Dendritic cell treated with granulocyte-macrophage colony-stimulating factor and Interleukin-4, amounts not matched to agents 40 ng/mL and 50 ng/mL, for 4 days (primary cell): ENCODE measurements at regions of chr6 and their contacts with region 1.

Region 1: GRCh38 chr6:135280375-135281136 is 99.4 kb downstream of the MYB start:
- H3K4me3 Mint-ChIP-seq: no peak overlapping the region
- H3K27ac Mint-ChIP-seq: peak overlapping the region; percentile 58
- H3K4me1 Mint-ChIP-seq: peaks cover 35% of the 10 kb centered on the region
- H3K27me3 Mint-ChIP-seq: no peaks in the 10 kb centered on the region

Region 2: DNA sequence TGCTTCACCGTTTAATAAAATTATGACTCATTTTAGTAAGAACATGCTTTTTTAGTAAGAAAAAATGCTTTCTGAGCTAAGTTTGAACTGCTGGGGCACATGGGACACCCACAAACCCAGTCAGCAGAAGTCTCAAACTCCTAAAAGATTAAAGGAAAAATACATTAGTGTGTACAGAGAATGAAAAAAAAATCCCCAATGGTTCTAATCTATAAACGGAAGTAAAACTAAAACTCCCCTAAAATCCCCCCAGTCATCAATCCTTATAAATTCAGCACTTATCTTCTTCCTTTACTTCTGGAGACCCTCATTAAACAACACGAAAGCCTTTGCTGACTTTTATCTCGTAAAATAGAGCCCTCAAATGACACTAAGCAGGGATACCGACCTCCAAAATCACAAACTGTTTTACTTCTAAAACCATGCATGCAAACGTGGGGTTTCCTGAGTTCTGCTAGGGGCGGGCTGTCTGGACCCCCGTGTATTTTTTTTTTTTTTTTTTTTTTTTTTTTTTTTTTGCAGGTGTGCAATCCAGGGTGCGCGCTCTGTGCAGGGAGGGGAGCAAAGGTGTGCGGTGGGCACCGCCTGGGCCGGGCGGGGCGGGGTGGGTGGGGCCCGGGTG is 100.5 kb before region 1 on chr6:
- intact Hi-C with region 1: loop called (anchors 10 kb)
- H3K4me3 Mint-ChIP-seq: peak overlapping the region; percentile 87
- H3K27ac Mint-ChIP-seq: peak overlapping the region; percentile 71
- H3K4me1 Mint-ChIP-seq: peaks cover 42% of the 10 kb centered on the region
- H3K27me3 Mint-ChIP-seq: peaks cover 1% of the 10 kb centered on the region